Aorta (tissue), 5 donors: ENCODE measurements at regions of chr21 and their contacts with region 1.

Region 1: GRCh38 chr21:38614192-38614957 is 116.1 kb upstream of the ERG start:
- DNase-seq: no peak
- ATAC-seq: no peak
- H3K4me3 ChIP-seq: no peak overlapping the region
- H3K27ac ChIP-seq: no peak overlapping the region
- H3K4me1 ChIP-seq: peaks cover 5% of the 10 kb centered on the region in 2 donors
- H3K27me3 ChIP-seq: no peaks in the 10 kb centered on the region

Region 2: GRCh38 chr21:38596264-38597042 is 17.9 kb before region 1 on chr21:
- intact Hi-C with region 1: no loop called
- DNase-seq: no peak
- ATAC-seq: no peak
- H3K4me3 ChIP-seq: no peak overlapping the region
- H3K27ac ChIP-seq: peak overlapping the region in 1 of 2 donors; percentile 14
- H3K4me1 ChIP-seq: peaks cover 6 to 8% of the 10 kb centered on the region in 2 donors
- H3K27me3 ChIP-seq: no peaks in the 10 kb centered on the region

Region 3: DNA sequence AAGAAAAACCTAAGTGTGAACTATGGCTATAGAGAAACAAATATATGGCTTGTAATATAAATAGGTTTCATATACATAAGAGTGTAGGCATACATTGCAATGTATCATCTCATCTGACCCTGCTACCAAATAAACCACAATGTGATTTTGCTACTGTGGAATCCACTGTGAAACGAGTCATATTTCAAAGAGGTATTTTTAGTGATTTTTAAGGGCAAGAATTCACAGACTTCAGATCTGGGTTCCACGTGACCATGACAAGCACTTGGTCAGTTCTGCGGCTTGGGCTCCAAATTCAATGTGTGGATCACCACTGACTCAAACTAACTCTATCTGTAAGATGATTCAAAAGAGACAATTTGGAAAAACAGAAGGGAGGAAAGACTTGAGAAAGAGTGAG is 30.9 kb after region 1 on chr21:
- intact Hi-C with region 1: loop called in 1 of 2 experiments (anchors 5 kb)
- DNase-seq: no peak
- ATAC-seq: no peak
- H3K4me3 ChIP-seq: no peak overlapping the region
- H3K27ac ChIP-seq: no peak overlapping the region
- H3K4me1 ChIP-seq: peaks cover 9 to 11% of the 10 kb centered on the region in 2 donors
- H3K27me3 ChIP-seq: no peaks in the 10 kb centered on the region

Region 4: GRCh38 chr21:39715804-39716397 is 1101.5 kb after region 1 on chr21:
- intact Hi-C with region 1: no loop called
- DNase-seq: peak in 1 of 2 donors; percentile 54
- ATAC-seq: no peak
- H3K4me3 ChIP-seq: no peak overlapping the region
- H3K27ac ChIP-seq: no peak overlapping the region
- H3K4me1 ChIP-seq: no peaks in the 10 kb centered on the region
- H3K27me3 ChIP-seq: no peaks in the 10 kb centered on the region

Region 5: GRCh38 chr21:39788383-39788782 is 1174.0 kb after region 1 on chr21:
- intact Hi-C with region 1: no loop called
- DNase-seq: peak; percentile 69 to 90
- ATAC-seq: peak; percentile 92
- H3K4me3 ChIP-seq: no peak overlapping the region
- H3K27ac ChIP-seq: no peak overlapping the region
- H3K4me1 ChIP-seq: no peaks in the 10 kb centered on the region
- H3K27me3 ChIP-seq: no peaks in the 10 kb centered on the region